Activated B cell treated with CpG ODN at 0.5 μM for 24 hours (primary cell): ENCODE measurements at regions of chr3 and their contacts with region 1.

Region 1: GRCh38 chr3:19348929-19349564 is 200.7 kb downstream of the KCNH8 start:
- DNase-seq: no peak
- ATAC-seq: peak; percentile 77
- H3K4me3 Mint-ChIP-seq: peak overlapping the region; percentile 62
- H3K27ac Mint-ChIP-seq: peak overlapping the region; percentile 89
- H3K4me1 Mint-ChIP-seq: peaks cover 52% of the 10 kb centered on the region
- H3K27me3 Mint-ChIP-seq: no peaks in the 10 kb centered on the region
- CTCF ChIP-seq: no peak

Region 2: DNA sequence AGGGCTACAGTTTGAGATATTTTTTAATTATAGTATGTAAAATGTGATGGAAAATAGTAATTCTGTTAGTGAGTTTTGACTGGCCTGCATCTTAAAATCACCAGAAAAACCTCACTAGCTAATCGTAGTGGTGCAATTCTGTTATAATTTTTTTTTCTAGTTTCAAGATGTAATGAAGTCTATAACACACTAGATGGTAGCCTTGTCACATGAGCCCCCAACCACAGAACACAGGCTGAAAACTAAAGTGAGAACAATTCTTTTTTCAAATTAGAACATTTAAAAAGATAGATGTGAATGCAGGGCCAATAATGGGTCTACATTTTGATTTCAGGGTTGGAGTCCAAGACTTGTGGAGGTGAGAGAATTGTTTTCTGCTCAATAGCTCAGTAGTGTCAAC is 284.0 kb before region 1 on chr3:
- CTCF ChIA-PET with region 1: interaction called, 8 read pairs
- POLR2A ChIA-PET with region 1: no interaction called
- intact Hi-C with region 1: loop called (anchors 5 kb)
- DNase-seq: no peak
- ATAC-seq: no peak
- H3K4me3 Mint-ChIP-seq: no peak overlapping the region
- H3K27ac Mint-ChIP-seq: no peak overlapping the region
- H3K4me1 Mint-ChIP-seq: no peaks in the 10 kb centered on the region
- H3K27me3 Mint-ChIP-seq: no peaks in the 10 kb centered on the region
- CTCF ChIP-seq: no peak

Region 3: DNA sequence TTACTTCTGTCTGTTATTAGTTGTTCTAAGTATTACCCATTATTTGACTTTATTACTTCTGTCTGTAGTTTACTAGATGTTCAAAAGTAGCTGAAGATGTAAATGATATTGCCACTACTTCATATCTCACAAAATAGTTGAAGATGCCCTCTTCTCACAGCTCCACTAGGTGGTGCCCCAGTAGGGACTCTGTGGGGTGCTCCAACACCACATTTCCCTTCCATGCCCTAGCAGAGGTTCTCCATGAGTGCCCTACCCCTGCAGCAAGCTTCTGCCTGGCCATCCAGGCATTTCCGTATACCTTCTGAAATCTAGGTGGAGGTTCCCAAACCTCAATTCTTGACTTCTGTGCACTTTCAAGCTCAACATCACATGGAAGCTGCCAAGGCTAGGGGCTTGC is 120.0 kb before region 1 on chr3:
- CTCF ChIA-PET with region 1: interaction called, 11 read pairs
- POLR2A ChIA-PET with region 1: interaction called, 5 read pairs
- intact Hi-C with region 1: loop called (anchors 5 kb)
- DNase-seq: no peak
- ATAC-seq: no peak
- H3K4me3 Mint-ChIP-seq: no peak overlapping the region
- H3K27ac Mint-ChIP-seq: peak overlapping the region; percentile 93
- H3K4me1 Mint-ChIP-seq: peaks cover 23% of the 10 kb centered on the region
- H3K27me3 Mint-ChIP-seq: no peaks in the 10 kb centered on the region
- CTCF ChIP-seq: no peak

Region 4: DNA sequence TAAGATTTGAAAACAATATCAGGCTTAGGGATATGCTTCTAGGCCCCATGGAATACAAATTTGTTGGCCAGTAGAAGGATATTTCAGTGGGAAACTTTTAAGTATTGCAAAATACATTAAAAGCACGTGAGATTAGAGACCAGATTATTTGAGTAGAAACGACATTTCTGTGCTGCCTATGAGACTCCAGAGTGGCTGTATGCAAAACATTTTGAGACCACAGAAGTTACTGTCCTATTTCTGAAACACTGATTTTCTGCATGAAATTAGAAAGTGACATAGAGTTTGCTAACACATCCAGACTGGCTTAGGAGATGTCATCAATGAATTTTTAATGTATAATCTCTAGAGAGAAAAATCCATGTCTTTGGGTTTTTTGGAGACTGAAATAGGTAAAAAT is 100.9 kb before region 1 on chr3:
- CTCF ChIA-PET with region 1: no interaction called
- POLR2A ChIA-PET with region 1: no interaction called
- intact Hi-C with region 1: no loop called
- DNase-seq: no peak
- ATAC-seq: no peak
- H3K4me3 Mint-ChIP-seq: no peak overlapping the region
- H3K27ac Mint-ChIP-seq: no peak overlapping the region
- H3K4me1 Mint-ChIP-seq: peaks cover 13% of the 10 kb centered on the region
- H3K27me3 Mint-ChIP-seq: no peaks in the 10 kb centered on the region
- CTCF ChIP-seq: no peak

Region 5: GRCh38 chr3:19644405-19644804 is 295.4 kb after region 1 on chr3:
- CTCF ChIA-PET with region 1: no interaction called
- POLR2A ChIA-PET with region 1: no interaction called
- intact Hi-C with region 1: loop called (anchors 5 kb)
- DNase-seq: no peak
- ATAC-seq: peak; percentile 62
- H3K4me3 Mint-ChIP-seq: peak overlapping the region; percentile 28
- H3K27ac Mint-ChIP-seq: peak overlapping the region; percentile 80
- H3K4me1 Mint-ChIP-seq: peaks cover 19% of the 10 kb centered on the region
- H3K27me3 Mint-ChIP-seq: no peaks in the 10 kb centered on the region
- CTCF ChIP-seq: no peak

Region 6: DNA sequence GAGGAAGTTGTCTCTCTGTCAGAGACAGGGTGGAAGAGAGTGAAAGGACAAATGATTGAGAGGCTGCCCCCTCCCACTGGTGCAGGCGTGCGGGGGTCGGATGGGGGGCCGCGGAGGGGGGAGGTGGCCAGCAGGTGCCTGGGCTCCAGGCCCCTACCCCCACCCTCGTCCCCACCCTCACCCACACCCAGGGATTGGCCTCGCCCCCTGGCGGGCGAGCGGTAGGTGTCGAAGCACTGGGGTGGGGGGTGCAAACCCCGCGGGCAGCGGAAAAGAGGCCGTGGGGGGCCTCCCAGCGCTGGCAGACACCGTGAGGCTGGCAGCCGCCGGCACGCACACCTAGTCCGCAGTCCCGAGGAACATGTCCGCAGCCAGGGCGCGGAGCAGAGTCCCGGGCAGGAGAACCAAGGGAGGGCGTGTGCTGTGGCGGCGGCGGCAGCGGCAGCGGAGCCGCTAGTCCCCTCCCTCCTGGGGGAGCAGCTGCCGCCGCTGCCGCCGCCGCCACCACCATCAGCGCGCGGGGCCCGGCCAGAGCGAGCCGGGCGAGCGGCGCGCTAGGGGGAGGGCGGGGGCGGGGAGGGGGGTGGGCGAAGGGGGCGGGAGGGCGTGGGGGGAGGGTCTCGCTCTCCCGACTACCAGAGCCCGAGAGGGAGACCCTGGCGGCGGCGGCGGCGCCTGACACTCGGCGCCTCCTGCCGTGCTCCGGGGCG is 690.9 kb after region 1 on chr3 and contains the start of gene KAT2B:
- CTCF ChIA-PET with region 1: no interaction called
- POLR2A ChIA-PET with region 1: interaction called, 3 read pairs
- intact Hi-C with region 1: loop called (anchors 5 kb)
- DNase-seq: peak; percentile 86
- ATAC-seq: peak; percentile 78
- H3K4me3 Mint-ChIP-seq: peak within 1 kb of the TSS; percentile 95
- H3K27ac Mint-ChIP-seq: peak within 1 kb of the TSS; percentile 94
- H3K4me1 Mint-ChIP-seq: peaks cover 53% of the 10 kb centered on the region
- H3K27me3 Mint-ChIP-seq: no peaks in the 10 kb centered on the region
- CTCF ChIP-seq: peak; percentile 21
- total RNA-seq, gene KAT2B: 35.9 and 36.8 TPM in 2 replicates